ENCODE measurements at regions of chr17 and their contacts with region 1.

Region 1: DNA sequence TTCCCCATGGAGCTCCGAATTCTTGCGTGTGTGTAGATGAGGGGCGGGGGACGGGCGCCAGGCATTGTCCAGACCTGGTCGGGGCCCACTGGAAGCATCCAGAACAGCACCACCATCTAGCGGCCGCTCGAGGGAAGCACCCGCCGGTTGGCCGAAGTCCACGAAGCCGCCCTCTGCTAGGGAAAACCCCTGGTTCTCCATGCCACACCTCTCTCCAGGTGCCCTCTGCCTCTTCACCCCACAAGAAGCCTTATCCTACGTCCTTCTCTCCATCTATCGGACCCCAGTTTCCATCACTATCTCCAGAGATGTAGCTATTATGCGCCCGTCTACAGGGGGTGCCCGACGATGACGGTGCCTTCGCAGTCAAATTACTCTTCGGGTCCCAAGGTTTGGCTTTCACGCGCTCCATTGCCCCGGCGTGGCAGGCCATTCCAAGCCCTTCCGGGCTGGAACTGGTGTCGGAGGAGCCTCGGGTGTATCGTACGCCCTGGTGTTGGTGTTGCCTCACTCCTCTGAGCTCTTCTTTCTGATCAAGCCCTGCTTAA is 617 bp upstream of the SENP3 start:
- DNase-seq: peak; percentile 91 to 98
- ATAC-seq: peak; percentile 81 to 86
- H3K4me3 ChIP-seq: peak overlapping the region; percentile 77
- H3K27ac ChIP-seq: peak overlapping the region; percentile 90 to 97
- H3K4me1 ChIP-seq: peaks cover 45% of the 10 kb centered on the region
- CTCF ChIP-seq: peak; percentile 83
- EP300 ChIP-seq: no peak
- POLR2A ChIP-seq: 0 out of 2 replicates have a peak, but pooled peaks have one; percentile 11
- RAD21 ChIP-seq: peak; percentile 89 to 93

Region 2: GRCh38 chr17:7374353-7374752 is 186.7 kb before region 1 on chr17:
- CTCF ChIA-PET with region 1: interaction called, 16 read pairs
- POLR2A ChIA-PET with region 1: no interaction called
- DNase-seq: no peak
- ATAC-seq: peak in 1 of 2 experiments; percentile 50; a peak in 2 of 6 replicates
- H3K4me3 ChIP-seq: no peak overlapping the region
- H3K27ac ChIP-seq: no peak overlapping the region
- H3K4me1 ChIP-seq: no peaks in the 10 kb centered on the region
- CTCF ChIP-seq: no peak
- EP300 ChIP-seq: no peak
- POLR2A ChIP-seq: no peak
- RAD21 ChIP-seq: no peak

Region 3: GRCh38 chr17:7444682-7445618 is 116.2 kb before region 1 on chr17 and contains the start of gene CHRNB1:
- CTCF ChIA-PET with region 1: interaction called, 25 read pairs
- POLR2A ChIA-PET with region 1: no interaction called
- DNase-seq: peak; percentile 68 to 71
- ATAC-seq: peak; percentile 62 to 82
- H3K4me3 ChIP-seq: peak within 1 kb of the TSS; percentile 37
- H3K27ac ChIP-seq: peak within 1 kb of the TSS; percentile 63 to 74
- H3K4me1 ChIP-seq: peaks cover 23% of the 10 kb centered on the region
- CTCF ChIP-seq: no peak
- EP300 ChIP-seq: no peak
- POLR2A ChIP-seq: no peak
- RAD21 ChIP-seq: no peak
- polyA plus RNA-seq, gene CHRNB1: 6.5 and 6.9 TPM in 2 replicates

Region 4: GRCh38 chr17:7484067-7484918 is 76.8 kb before region 1 on chr17 and contains the start of gene POLR2A:
- CTCF ChIA-PET with region 1: interaction called, 41 read pairs
- POLR2A ChIA-PET with region 1: interaction called, 33 read pairs
- DNase-seq: peak; percentile 99
- ATAC-seq: peak; percentile 67 to 82
- H3K4me3 ChIP-seq: peak within 1 kb of the TSS; percentile 70
- H3K27ac ChIP-seq: peak within 1 kb of the TSS; percentile 91 to 97
- H3K4me1 ChIP-seq: peaks cover 48% of the 10 kb centered on the region
- CTCF ChIP-seq: no peak
- EP300 ChIP-seq: peak in 1 of 2 experiments; percentile 27; a peak in 1 of 5 replicates
- POLR2A ChIP-seq: peak; percentile 99
- RAD21 ChIP-seq: no peak
- polyA plus RNA-seq, gene POLR2A: 22.8 and 57.1 TPM in 2 replicates

Region 5: GRCh38 chr17:7515911-7516610 is 45.0 kb before region 1 on chr17:
- CTCF ChIA-PET with region 1: interaction called, 232 read pairs
- POLR2A ChIA-PET with region 1: interaction called, 5 read pairs
- DNase-seq: peak in 1 of 2 experiments; percentile 33
- ATAC-seq: no peak
- H3K4me3 ChIP-seq: no peak overlapping the region
- H3K27ac ChIP-seq: no peak overlapping the region
- H3K4me1 ChIP-seq: no peaks in the 10 kb centered on the region
- CTCF ChIP-seq: no peak
- EP300 ChIP-seq: no peak
- POLR2A ChIP-seq: no peak
- RAD21 ChIP-seq: no peak

Region 6: GRCh38 chr17:7548585-7549400 is 12.3 kb before region 1 on chr17 and contains the start of gene TNFSF12:
- CTCF ChIA-PET with region 1: interaction called, 190 read pairs
- POLR2A ChIA-PET with region 1: no interaction called
- DNase-seq: peak in 1 of 2 experiments; percentile 42
- ATAC-seq: peak; percentile 89
- H3K4me3 ChIP-seq: peak within 1 kb of the TSS; percentile 63
- H3K27ac ChIP-seq: peak within 1 kb of the TSS; percentile 81 to 90
- H3K4me1 ChIP-seq: peaks cover 17% of the 10 kb centered on the region
- CTCF ChIP-seq: peak; percentile 19; the same call in 1 of the 3 replicates
- EP300 ChIP-seq: no peak
- POLR2A ChIP-seq: peak; percentile 82
- RAD21 ChIP-seq: no peak
- polyA plus RNA-seq, gene TNFSF12: 11.9 and 12.4 TPM in 2 replicates

Region 7: DNA sequence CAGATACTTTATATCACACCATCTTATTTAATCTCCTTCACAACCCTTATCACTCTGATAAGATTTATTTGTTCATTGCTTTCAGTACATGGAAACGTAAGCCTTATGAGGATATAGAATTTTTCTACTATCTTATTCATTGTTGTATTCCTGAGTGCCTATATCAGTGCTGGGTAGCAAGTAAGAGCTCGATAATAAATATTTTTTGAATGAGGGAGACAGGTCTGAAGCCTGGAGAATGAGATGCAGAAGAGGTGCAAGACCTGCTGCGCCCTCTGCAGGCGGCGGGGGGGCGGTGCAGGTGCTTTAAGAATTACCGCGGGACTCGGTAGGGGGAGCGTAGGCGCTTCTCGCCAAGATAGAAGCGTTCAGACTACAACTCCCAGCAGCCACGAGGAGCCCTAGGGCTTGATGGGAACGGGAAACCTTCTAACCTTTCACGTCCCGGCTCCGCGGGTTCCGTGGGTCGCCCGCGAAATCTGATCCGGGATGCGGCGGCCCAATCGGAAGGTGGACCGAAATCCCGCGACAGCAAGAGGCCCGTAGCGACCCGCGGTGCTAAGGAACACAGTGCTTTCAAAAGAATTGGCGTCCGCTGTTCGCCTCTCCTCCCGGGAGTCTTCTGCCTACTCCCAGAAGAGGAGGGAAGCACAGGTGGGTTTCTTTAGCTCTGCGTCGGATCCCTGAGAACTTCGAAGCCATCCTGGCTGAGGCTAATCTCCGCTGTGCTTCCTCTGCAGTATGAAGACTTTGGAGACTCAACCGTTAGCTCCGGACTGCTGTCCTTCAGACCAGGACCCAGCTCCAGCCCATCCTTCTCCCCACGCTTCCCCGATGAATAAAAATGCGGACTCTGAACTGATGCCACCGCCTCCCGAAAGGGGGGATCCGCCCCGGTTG is 127.1 kb after region 1 on chr17 and contains the start of gene WRAP53:
- CTCF ChIA-PET with region 1: interaction called, 27 read pairs
- POLR2A ChIA-PET with region 1: interaction called, 10 read pairs
- DNase-seq: peak; percentile 98 to 99
- ATAC-seq: peak; percentile 85 to 91
- H3K4me3 ChIP-seq: peak within 1 kb of the TSS; percentile 77
- H3K27ac ChIP-seq: peak within 1 kb of the TSS; percentile 94 to 95
- H3K4me1 ChIP-seq: peaks cover 23% of the 10 kb centered on the region
- CTCF ChIP-seq: peak; percentile 99
- EP300 ChIP-seq: no peak
- POLR2A ChIP-seq: peak; percentile 66
- RAD21 ChIP-seq: peak; percentile 86
- polyA plus RNA-seq, gene WRAP53: 15.9 and 17.4 TPM in 2 replicates

Measured in A549 (cell line).